Sigmoid colon (tissue), 7 donors: ENCODE measurements at regions of chr19 and their contacts with region 1.

Region 1: GRCh38 chr19:58154679-58155648 is 4.4 kb upstream of the ZNF329 start:
- DNase-seq: peak; percentile 97
- H3K4me3 ChIP-seq: peak overlapping the region; percentile 78 to 100 (median 94)
- H3K27ac ChIP-seq: peak overlapping the region; percentile 88 to 99 (median 98)
- H3K4me1 ChIP-seq: peaks cover 0 to 33% (median 24%) of the 10 kb centered on the region in 4 donors
- H3K27me3 ChIP-seq: no peaks in the 10 kb centered on the region
- CTCF ChIP-seq: peak; percentile 96 to 98 (median 97)
- EP300 ChIP-seq: no peak
- POLR2A ChIP-seq: peak; percentile 31 to 37

Region 2: DNA sequence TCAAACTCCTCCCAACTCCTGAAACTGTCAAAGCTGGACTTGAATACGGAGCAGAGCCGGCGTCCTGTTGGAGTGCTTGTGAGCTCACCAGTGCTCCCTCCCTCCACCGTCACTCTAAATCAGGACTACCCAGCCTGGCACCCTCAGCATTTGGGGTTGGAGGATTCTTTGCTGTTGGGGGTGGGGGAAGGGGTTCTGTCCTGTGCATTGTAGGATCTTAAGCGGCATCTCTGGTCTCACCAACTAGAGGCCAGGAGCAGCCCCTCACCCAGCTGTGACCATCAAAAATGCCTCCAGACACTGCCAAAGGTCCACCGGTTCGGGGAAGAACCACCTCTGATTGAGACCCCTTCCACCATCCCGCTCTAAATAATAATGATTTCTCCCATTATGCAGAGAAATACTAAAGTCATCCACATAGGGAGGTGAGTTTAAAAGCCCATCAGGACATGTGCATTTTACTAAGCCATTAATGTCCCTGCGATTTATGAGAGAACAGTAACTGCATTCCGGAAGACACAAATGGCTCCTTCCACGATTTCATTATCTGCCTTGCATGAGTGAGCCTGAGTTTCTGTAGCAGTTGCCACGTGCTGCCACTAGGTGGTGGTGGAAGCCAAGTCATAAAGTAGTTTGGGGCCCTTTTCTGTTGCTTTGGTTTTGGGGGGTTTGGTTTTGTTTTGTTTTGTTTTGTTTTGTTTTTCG is 1051.2 kb before region 1 on chr19:
- intact Hi-C with region 1: loop called (anchors 10 kb)
- DNase-seq: peak; percentile 76
- H3K4me3 ChIP-seq: peak overlapping the region in 1 of 4 donors; percentile 28
- H3K27ac ChIP-seq: no peak overlapping the region
- H3K4me1 ChIP-seq: peaks cover 0 to 20% (median 11%) of the 10 kb centered on the region in 4 donors
- H3K27me3 ChIP-seq: peaks cover 12 to 38% (median 20%) of the 10 kb centered on the region in 3 donors
- CTCF ChIP-seq: peak; percentile 75 to 84 (median 80)
- EP300 ChIP-seq: no peak
- POLR2A ChIP-seq: no peak

Region 3: DNA sequence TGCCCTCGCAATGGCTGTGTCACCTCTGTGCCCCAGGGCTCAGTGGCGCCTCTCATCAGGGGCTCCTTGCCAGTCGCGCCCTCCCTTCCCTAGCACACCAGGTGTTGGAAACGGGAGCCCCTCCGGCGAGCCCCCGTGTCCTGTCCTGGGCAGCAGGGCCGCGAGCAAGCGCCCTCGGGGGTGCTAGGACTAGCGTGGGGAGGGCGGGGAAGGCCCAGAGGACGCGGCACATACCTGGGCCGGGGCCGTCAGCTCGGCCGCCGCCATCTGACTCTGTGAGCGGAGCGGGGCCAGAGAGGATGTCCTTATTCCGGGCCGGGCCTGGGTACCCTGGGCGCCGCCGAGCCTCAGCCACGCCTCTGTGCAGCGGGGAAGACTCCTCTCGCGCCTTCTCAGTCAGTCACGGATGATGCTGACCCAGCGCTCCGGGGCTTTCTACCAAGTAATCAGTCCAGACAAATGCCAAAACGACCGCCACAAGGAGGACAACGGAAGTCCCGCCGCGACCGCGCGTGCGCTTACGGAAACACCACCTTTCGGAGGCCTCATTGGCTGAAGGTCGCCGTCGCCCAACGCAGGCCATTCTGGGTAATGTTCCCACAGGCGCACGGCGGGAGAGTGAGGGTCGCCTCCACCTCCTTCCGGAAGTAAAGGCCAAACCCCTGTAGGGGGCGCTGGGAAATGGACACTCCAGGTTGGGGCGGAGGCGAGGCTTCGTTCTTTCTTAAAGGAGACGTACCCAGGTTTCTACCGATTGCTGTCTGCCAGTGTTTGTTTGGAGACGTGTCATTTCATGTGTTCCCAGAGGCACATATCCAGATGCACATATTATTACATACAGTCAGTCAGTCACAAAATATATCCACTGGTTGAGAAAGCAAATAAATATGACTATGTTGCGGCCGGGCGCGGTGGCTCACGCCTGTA is 207.5 kb before region 1 on chr19 and contains the start of gene ZNF256:
- intact Hi-C with region 1: loop called (anchors 2 kb)
- DNase-seq: peak; percentile 97
- H3K4me3 ChIP-seq: peak within 1 kb of the TSS; percentile 80 to 96 (median 92)
- H3K27ac ChIP-seq: peak within 1 kb of the TSS; percentile 83 to 88 (median 86)
- H3K4me1 ChIP-seq: peaks cover 0 to 16% (median 12%) of the 10 kb centered on the region in 4 donors
- H3K27me3 ChIP-seq: no peaks in the 10 kb centered on the region
- CTCF ChIP-seq: peak; percentile 51 to 67 (median 60)
- EP300 ChIP-seq: no peak
- POLR2A ChIP-seq: peak; percentile 19 to 27
- total RNA-seq, gene ZNF256: 2.8 to 4.8 (median 3.8) TPM

Region 4: GRCh38 chr19:58002384-58003173 is 152.4 kb before region 1 on chr19 and contains the start of gene ZNF606:
- intact Hi-C with region 1: loop called (anchors 5 kb)
- DNase-seq: peak; percentile 91
- H3K4me3 ChIP-seq: peak within 1 kb of the TSS; percentile 63 to 99 (median 72)
- H3K27ac ChIP-seq: peak within 1 kb of the TSS; percentile 83 to 96 (median 90)
- H3K4me1 ChIP-seq: peaks cover 0 to 27% (median 21%) of the 10 kb centered on the region in 4 donors
- H3K27me3 ChIP-seq: no peaks in the 10 kb centered on the region
- CTCF ChIP-seq: no peak
- EP300 ChIP-seq: no peak
- POLR2A ChIP-seq: peak; percentile 64 to 70
- total RNA-seq, gene ZNF606: 9.8 to 32.1 (median 19.0) TPM

Region 5: DNA sequence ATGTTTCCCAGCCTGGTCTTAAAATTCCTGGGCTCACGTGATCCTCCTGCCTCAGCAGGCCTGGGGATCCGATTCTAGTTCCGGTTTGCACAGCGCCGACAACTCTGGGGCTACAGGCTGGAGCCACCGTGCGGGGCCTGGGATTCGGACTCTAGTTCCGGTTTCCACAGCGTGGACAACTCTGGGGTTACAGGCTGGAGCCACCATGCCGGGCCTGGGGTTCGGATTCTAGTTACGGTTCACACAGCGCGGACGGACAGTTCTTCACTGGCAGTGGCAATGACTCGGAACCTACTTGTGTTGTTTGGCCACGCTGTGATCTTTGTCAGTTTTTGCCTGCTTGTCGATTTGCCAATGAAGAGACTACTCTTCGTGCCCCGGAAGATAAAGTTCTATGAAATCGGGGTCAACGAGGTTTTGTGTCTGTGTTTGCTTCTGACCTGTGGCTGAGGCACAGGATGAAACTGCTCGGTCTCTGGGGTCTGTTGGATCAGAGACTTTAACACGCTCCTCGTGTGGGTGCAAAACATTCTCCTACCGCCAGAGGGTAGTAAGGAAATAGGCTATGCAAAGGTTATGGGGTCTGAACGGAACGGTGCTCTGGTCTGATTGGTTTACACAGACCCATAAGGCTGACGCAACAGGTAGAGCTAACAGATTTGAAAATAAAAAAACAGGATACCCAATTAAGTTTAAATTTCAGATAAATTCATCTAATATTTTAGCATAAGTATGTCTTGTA is 133.3 kb before region 1 on chr19:
- intact Hi-C with region 1: loop called (anchors 1 kb)
- DNase-seq: peak; percentile 73
- H3K4me3 ChIP-seq: no peak overlapping the region
- H3K27ac ChIP-seq: no peak overlapping the region
- H3K4me1 ChIP-seq: no peaks in the 10 kb centered on the region
- H3K27me3 ChIP-seq: no peaks in the 10 kb centered on the region
- CTCF ChIP-seq: peak; percentile 56 to 84 (median 66)
- EP300 ChIP-seq: no peak
- POLR2A ChIP-seq: no peak

Region 6: DNA sequence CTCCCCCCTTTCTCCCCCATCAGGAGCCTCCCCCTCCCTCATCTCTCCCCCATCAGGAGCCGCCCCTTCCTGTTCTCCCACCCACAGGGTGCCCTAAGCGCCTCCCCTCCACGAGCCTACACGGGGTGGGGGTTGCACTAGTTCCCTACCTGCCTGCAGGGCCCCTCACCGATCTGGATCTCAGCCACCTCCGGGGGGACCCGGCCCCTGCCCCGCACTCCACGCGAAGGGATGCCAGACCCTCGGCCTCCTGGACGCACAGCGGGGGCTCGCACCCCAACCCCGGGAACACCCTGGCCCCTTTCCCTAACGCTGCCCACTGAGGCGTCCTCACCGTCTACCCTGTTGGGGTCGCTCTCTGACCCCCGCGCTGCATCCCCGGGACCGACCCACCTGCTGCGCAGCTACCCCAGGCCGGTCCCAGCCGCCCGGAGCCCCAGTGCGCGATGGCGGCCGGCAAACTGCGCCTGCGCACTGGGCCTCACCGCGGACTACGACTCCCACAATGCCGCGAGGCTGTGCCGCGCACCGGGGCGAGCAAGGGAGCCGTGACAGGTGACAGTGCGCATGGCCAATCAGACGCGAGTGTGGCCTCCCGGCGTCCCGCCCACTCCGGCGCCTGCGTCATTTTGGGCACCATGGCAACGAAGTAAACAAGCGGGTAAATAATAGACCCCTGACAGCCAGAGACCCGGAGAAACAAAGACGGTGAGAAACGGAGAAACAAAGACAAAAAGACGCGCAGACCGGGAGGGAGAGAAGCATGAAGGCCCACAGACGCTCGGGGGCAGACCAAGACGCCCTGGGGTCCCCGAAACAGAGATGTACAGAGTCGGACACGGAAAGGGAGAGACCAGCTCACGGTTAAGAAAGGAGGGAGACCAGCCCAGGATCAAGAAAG is 56.9 kb before region 1 on chr19 and contains the start of gene ZSCAN18:
- intact Hi-C with region 1: loop called (anchors 2 kb)
- DNase-seq: peak; percentile 99
- H3K4me3 ChIP-seq: peak within 1 kb of the TSS; percentile 87 to 99 (median 92)
- H3K27ac ChIP-seq: peak within 1 kb of the TSS; percentile 87 to 94 (median 92)
- H3K4me1 ChIP-seq: peaks cover 0 to 17% (median 15%) of the 10 kb centered on the region in 4 donors
- H3K27me3 ChIP-seq: no peaks in the 10 kb centered on the region
- CTCF ChIP-seq: no peak
- EP300 ChIP-seq: peak; percentile 32 to 88 (median 57)
- POLR2A ChIP-seq: peak; percentile 64 to 69
- total RNA-seq, gene ZSCAN18: 64.7 to 85.3 (median 73.8) TPM

Region 7: GRCh38 chr19:58108546-58108817 is 46.5 kb before region 1 on chr19:
- intact Hi-C with region 1: no loop called
- DNase-seq: no peak
- H3K4me3 ChIP-seq: no peak overlapping the region
- H3K27ac ChIP-seq: no peak overlapping the region
- H3K4me1 ChIP-seq: no peaks in the 10 kb centered on the region
- H3K27me3 ChIP-seq: no peaks in the 10 kb centered on the region
- CTCF ChIP-seq: no peak
- EP300 ChIP-seq: no peak
- POLR2A ChIP-seq: no peak

Region 8: DNA sequence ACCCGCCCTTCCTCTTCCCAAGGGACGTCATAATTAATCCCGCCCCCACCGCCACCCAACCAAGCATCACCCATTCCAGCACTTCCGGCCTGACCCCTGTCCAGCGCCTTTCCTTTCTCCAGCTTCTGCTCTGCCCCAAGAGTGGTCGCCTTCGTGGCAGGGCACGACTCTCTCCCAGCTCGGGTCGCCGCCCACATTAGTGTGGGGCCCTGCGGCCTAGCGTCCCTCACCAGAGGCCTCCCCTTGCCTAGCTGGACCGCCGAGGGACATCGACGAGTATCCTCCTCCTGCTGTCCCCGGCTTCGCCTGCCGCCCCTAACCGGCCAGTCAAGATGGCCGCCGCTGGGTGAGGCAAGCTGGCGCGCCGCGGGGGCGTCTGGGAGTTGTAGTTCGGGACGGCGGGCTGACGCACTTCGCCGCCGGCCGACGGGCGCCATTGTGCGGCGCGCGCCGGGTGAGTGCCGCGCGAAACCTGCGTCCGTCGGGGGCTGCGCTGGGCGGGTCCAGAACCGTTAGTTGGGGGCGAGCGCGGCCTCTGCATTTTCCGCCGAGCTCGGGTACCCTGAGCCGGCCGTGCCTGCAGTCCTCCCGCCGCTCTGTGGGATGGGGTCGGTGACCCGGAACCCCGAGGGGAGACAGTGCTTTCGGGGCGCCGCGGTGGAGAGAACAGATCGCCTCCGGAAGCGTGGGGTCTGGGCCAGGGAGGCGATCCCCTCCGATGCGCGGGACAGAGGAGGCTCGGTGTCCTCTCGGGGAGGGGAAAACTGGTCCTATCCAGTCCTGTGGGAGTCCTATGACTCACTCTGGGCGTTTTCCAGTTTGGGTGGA is 28.2 kb after region 1 on chr19 and contains the start of gene ZNF274:
- intact Hi-C with region 1: no loop called
- DNase-seq: peak; percentile 98
- H3K4me3 ChIP-seq: peak within 1 kb of the TSS; percentile 62 to 77 (median 68)
- H3K27ac ChIP-seq: peak within 1 kb of the TSS; percentile 91 to 97 (median 94)
- H3K4me1 ChIP-seq: peaks cover 0 to 9% (median 0%) of the 10 kb centered on the region in 4 donors
- H3K27me3 ChIP-seq: no peaks in the 10 kb centered on the region
- CTCF ChIP-seq: no peak
- EP300 ChIP-seq: no peak
- POLR2A ChIP-seq: peak; percentile 54 to 57
- total RNA-seq, gene ZNF274: 18.3 to 26.7 (median 22.6) TPM